Right ventricle myocardium inferior (tissue), 1 donor: ENCODE measurements at regions of chr4 and their contacts with region 1.

Region 1: DNA sequence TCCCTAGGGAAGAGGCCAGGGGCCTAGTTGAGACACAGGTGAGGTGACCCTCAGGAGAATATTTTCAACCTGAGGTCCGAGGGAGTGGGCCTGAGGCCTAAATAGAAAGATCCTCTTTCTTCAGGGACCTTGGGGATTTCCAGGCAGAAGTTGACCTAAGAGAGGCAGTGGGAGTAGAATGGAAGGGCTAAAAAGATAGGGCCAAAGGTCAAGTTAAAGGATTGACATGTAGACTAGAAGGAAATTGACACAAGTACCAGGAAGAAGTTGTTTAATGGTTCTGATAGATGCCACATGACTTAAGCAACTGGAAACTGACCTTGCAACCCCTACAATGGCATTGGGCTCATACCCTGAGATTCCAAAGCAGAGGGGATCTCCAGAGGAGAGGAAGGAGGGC is 76.9 kb downstream of the SHROOM3 start:
- DNase-seq: no peak
- ATAC-seq: no peak

Region 2: GRCh38 chr4:76658231-76659102 is 146.5 kb after region 1 on chr4:
- intact Hi-C with region 1: loop called (anchors 5 kb)
- DNase-seq: no peak
- ATAC-seq: no peak

Region 3: DNA sequence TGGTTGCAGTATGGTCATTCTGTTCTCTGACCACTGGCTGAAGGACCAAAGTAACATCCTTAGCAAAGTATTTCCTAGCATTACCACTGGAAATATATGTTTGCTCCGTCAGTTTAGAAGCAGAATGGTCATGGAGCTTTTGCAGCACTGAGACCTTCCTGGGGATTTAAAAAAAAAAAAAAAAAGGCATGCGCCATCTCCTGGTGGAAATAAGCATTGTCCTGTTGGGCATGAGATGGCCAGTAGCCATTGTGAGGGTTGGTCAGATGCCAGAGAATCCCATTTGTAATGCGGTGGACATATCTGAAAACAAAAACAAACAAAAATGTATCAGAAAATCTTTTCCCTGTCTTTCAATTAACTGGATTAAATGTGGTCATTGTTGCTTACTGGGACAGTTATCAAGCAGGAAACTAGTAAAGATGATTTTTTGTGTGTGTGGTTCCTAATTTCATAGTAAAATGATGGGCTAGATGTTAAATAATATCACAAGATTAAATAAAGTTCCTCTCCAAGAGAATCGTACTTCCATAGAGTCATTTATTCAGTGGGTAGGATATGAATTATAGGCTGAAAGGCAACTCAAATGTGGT is 246.4 kb after region 1 on chr4:
- intact Hi-C with region 1: loop called (anchors 5 kb)
- DNase-seq: no peak
- ATAC-seq: peak; percentile 55

Region 4: GRCh38 chr4:76949276-76950051 is 437.5 kb after region 1 on chr4 and contains the start of gene SEPTIN11:
- intact Hi-C with region 1: loop called (anchors 5 kb)
- DNase-seq: peak; percentile 94
- ATAC-seq: peak; percentile 92
- total RNA-seq, gene SEPTIN11: 32.9 TPM

Region 5: GRCh38 chr4:77044461-77045150 is 532.7 kb after region 1 on chr4:
- intact Hi-C with region 1: loop called (anchors 2 kb)
- DNase-seq: no peak
- ATAC-seq: peak; percentile 24

Region 6: DNA sequence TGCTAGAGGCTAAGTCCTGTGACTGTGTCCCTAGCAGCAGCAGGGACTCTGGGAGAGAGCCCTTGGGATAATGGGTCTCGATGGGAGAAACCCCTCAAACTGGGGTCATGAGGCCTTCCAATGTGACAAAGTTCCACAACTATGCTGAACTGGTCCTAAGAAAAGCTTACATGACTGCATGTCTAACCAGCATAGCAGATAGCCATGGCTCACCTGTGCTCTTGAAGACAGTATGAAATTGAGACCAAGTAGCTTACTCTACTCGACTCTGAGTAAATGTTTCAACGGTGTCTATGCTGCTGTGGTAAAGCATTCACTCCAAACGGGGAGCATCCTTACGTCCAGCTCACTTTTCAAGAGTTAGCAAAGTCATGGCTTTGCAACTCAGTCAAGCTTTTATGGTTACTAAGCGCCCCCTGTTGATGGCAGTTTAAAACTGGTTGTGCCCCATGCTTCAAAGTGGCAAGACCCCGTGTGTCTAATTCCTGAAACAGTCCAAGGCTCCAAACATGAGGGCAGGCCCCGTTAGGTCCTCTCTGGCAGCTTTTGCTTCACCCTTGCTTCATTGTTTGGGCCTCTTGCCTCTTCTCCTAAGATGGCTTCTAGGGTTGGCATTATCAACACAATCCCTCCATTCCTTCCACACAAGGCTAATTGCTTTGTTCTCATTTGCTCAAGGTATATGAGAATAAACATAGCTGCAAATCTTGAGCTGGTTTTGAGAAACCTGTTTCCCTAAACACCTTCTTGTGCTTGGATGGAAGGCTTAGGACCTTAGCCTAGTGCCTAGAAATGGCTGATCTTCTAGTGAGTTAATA is 691.6 kb after region 1 on chr4:
- intact Hi-C with region 1: loop called (anchors 5 kb)
- DNase-seq: peak; percentile 68
- ATAC-seq: peak; percentile 62